SK-N-SH (cell line): ENCODE measurements at regions of chr3 and their contacts with region 1.

Region 1: GRCh38 chr3:48929358-48930035 is 10.9 kb downstream of the ARIH2 start:
- DNase-seq: no peak
- H3K4me3 ChIP-seq: no peak overlapping the region
- H3K27ac ChIP-seq: peak overlapping the region in 1 of 2 experiments; percentile 19; a peak in 1 of 4 replicates
- H3K4me1 ChIP-seq: peaks cover 13 to 24% of the 10 kb centered on the region in 2 experiments; a peak in 3 of 4 replicates
- H3K27me3 ChIP-seq: no peaks in the 10 kb centered on the region
- CTCF ChIP-seq: no peak
- EP300 ChIP-seq: no peak
- RAD21 ChIP-seq: no peak

Region 2: DNA sequence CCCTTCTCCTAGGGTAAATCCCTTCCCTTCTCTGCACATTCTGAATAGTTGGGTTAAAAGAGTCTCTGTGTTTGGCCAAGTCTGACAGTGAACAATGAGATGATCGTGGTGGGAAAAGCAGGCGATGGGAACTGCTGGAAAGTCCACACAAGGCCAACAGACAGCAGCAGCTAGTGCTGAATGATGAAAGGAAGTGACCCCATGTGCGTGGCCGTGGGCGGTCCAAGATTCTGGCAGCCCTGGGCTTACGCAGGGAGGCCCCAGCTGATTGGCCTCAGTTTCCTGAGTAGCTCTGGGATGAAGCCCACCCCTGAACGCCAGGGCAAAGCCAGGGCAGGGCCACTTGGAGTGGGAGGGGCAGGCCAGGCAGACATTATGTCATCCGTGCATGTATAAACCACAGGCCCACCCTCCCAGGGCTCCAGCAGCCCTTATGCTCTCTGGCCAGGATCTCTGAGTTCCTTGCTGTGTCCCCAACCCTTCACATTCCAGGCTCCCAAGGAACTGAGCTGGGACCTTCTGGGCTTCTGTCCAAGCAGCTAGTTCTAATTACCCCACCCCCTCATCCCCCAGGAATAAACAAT is 799.1 kb before region 1 on chr3:
- CTCF ChIA-PET with region 1: no interaction called
- POLR2A ChIA-PET with region 1: no interaction called
- DNase-seq: no peak
- H3K4me3 ChIP-seq: no peak overlapping the region
- H3K27ac ChIP-seq: no peak overlapping the region
- H3K4me1 ChIP-seq: peaks cover 0 to 3% of the 10 kb centered on the region in 2 experiments; a peak in 1 of 4 replicates
- H3K27me3 ChIP-seq: no peaks in the 10 kb centered on the region
- CTCF ChIP-seq: no peak
- EP300 ChIP-seq: no peak
- RAD21 ChIP-seq: no peak

Region 3: DNA sequence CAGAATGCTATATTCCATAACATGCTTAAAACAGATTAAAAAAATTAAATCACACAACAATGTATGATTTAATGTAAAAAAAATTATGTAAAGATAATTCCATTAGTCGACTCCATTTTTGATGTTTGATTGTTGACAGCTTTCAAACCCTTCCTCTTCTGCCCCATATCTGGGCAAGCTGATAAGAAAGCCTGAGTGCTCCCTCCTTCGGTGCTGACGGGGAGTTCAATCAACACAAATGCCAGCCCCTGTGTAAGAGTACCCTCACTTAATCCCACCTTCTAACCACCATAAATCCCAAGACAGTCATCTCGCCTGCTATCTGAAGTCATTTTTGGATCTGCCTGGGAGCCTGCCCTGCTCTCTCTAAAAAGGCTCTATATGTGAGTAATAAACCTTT is 152.6 kb before region 1 on chr3:
- CTCF ChIA-PET with region 1: no interaction called
- POLR2A ChIA-PET with region 1: no interaction called
- DNase-seq: no peak
- H3K4me3 ChIP-seq: no peak overlapping the region
- H3K27ac ChIP-seq: no peak overlapping the region
- H3K4me1 ChIP-seq: no peaks in the 10 kb centered on the region
- H3K27me3 ChIP-seq: no peaks in the 10 kb centered on the region
- CTCF ChIP-seq: no peak
- EP300 ChIP-seq: no peak
- RAD21 ChIP-seq: no peak

Region 4: DNA sequence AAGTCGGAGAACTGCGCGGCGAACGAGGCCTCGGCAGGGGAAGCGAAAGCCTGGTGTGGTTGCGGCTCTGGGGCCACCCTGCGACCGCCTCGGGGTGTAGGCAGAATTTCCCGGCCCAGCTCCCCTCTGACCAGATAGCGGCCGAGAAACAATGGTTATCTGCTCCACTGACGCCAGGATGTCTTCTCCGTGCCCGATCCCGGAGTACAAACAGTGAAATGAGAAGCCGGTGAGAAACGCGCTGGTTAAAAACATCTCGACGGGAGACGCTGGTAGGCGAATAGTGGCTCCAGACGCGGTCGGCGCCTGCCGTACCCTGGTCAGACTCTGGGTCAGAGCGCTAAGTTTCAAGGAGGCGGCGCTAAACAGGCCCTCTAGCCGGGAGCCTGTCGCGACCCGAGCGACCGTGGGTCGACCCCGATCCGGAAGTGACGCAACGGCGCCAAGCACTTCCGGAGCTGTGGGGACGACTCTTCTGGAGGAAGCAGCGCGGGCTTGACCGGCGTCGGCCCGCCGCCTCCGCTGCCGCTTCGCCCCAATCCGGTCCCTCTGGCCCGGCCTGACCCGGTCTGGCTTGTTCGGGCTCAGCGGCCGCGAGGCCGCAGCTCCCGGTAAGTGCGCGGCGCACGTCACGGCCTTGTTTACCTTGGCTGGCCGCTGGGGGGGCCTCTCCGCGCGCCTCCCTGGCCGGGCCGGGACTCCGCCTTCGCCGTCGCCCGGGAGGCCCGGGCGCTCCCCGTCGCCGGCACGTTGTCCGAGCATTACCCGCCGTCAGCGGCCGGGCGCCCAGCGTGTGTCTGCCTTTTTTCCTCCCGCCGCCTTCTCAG is 10.9 kb before region 1 on chr3 and contains the start of gene ARIH2:
- CTCF ChIA-PET with region 1: interaction called, 18 read pairs
- POLR2A ChIA-PET with region 1: interaction called, 6 read pairs
- DNase-seq: peak; percentile 97
- H3K4me3 ChIP-seq: peak within 1 kb of the TSS; percentile 69 to 74
- H3K27ac ChIP-seq: peak within 1 kb of the TSS; percentile 88 to 93
- H3K4me1 ChIP-seq: peaks cover 0 to 3% of the 10 kb centered on the region in 2 experiments; a peak in 1 of 4 replicates
- H3K27me3 ChIP-seq: no peaks in the 10 kb centered on the region
- CTCF ChIP-seq: no peak
- EP300 ChIP-seq: no peak; a peak in 1 of 4 replicates
- RAD21 ChIP-seq: no peak; the same call in 1 of the 2 replicates
- polyA plus RNA-seq, gene ARIH2: 69.7 and 94.4 TPM in 2 replicates

Region 5: DNA sequence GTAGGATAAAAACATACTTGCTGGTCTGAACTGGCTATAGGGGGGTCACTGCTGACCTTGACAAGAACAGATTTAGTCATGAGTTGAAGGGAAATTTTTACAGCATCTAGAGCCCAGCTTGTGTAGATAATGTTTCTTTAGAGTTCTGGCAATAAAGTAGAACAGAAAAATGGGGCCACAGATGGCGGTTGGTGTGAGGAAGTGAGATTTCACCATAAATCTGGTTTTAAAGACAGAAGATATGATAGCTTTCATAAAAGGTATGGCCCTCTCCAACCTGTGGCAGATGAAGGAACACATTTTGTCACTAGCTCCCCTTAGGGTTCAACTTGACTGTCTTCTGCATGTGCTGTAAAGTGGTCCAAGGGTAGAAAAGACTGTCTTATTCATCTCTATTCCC is 124.0 kb after region 1 on chr3:
- CTCF ChIA-PET with region 1: no interaction called
- POLR2A ChIA-PET with region 1: no interaction called
- DNase-seq: no peak
- H3K4me3 ChIP-seq: no peak overlapping the region
- H3K27ac ChIP-seq: no peak overlapping the region
- H3K4me1 ChIP-seq: no peaks in the 10 kb centered on the region; a peak in 1 of 4 replicates
- H3K27me3 ChIP-seq: no peaks in the 10 kb centered on the region
- CTCF ChIP-seq: no peak
- EP300 ChIP-seq: no peak
- RAD21 ChIP-seq: no peak